Posterior vena cava (tissue), 2 donors: ENCODE measurements at regions of chr2 and their contacts with region 1.

Region 1: GRCh38 chr2:69095305-69095704 is 82.3 kb downstream of the ANTXR1 start:
- DNase-seq: no peak

Region 2: DNA sequence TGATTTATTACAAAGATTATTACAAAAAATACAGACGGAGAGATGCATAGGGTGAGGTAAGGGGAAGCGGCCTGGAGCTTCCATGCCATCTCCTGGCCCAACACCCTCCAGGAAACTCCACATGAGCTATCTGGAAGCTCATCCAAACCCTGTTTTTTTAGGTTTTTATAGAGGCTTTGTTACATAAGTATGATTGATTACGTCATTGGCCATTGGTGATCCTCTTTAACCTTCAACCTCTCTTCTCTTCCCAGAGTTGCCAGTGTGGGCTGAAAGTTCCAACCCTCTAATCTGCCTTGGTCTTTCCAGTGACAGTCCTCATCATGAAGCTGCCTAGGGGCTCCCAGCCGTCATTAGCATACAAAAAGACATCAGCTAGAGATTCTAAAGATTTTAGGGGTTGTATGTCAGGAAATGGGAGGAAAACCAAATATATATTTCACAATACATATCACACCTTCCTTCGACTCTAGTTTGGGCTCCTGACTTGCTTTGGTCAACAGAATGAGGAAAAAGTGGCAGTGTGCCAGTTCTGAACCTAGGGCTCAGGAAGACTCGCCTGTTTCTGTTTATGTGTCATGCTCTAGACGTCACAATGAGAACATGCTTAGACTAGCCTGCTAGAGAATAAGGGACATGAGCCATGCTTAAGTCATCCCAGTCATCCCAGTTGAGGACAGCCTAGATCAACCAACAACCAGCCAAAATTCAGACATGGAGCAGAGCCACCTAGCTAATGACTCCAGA is 1644.0 kb before region 1 on chr2:
- intact Hi-C with region 1: no loop called
- DNase-seq: no peak

Region 3: DNA sequence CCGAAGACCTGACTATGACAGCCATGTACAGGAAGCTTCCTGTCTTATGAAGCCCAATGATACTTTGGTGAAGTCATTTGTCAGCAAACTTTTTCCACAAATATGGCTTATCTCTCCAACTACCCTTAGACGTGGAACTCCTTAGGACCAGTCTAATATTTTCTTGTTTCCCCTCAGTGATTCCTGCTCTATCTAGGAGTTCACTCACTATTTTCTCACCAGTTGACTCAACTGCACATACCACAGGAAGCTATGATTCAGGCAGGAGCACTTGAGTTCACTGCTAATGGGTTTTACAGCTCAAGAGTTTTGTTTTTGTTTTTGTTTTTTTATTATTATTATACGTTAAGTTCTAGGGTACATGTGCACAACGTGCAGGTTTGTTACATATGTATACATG is 27.0 kb after region 1 on chr2:
- intact Hi-C with region 1: no loop called
- DNase-seq: no peak

Region 4: DNA sequence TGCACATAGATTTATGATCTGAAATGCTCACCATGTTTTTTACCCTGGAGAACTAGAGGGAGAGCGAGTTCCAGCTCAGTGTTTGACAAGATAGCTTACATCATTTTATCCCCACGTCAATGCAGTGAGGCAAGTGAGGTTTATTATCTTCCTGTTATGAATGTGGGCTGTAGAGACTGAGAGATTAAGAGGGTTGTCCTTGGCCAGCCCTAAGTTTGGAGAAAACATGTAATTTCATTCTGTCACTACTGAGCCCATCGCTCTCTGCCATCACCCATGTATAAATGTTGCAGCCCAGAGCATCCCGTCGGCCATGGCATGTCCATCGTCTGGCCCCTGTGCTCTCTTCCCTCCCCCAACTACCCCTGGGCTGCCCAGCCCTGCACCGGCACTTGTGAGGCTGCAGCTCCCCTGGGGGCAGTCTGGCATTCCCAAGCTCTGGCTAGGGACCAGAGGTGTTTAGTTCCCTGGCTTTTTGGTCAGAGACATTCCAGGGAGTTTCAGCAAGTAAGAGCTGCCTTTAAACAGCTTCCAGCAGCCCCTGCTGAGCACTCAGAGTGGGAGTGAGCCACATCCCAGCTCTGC is 54.4 kb after region 1 on chr2:
- intact Hi-C with region 1: loop called in 1 of 2 experiments (anchors 10 kb)
- DNase-seq: peak; percentile 87